Motor neuron (in vitro differentiated cells): ENCODE measurements at regions of chr16 and their contacts with region 1.

Region 1: GRCh38 chr16:68396481-68396880 is 51.8 kb downstream of the SMPD3 start:
- ATAC-seq: peak in 5 of 8 experiments; percentile 25 to 69 (median 32)
- H3K4me3 ChIP-seq: no peak overlapping the region
- H3K27ac ChIP-seq: no peak overlapping the region
- H3K4me1 ChIP-seq: peaks cover 2 to 4% of the 10 kb centered on the region in 2 donors

Region 2: DNA sequence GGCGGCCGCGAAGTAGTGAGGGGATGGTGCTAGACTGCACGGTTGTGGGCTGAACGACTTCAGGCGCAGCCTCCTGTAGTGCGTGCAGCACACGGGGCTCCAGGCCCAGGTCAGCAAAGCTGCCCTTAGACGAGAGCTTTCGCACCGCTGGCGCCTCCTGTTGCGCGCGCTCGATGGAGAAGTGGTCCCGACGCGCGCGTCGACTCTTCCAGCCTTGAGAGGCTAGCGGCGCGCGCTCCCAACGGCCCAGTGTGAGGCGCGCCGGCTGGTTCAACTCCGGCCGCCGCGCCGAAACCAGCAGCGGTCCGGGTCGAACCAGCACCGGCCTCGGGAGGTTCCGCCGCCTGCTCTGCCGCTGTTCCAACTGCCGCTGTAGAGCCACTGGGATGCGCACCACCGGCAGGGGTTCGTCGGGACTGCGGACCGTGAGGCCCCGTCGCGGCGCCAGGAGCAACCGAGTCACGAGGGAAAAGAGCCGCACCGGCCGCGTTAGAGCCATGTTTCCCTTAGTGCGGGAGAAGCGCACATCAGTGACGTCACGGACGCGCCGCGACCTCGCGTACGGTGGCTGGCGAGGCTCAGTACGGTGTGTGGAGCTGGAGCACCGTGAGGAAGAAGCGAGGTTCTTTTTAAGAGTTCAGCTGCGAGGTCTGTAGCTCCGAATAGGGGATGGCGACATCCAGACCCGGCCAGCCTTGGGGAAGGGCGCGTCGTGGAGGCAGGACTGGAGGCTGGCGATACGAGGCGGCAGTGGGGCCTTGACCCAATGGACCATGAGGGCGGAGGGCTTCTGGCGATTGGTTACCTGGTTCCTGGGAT is 373.6 kb before region 1 on chr16 and contains the starts of genes DDX28 and DUS2:
- in situ Hi-C with region 1: no loop called
- ATAC-seq: peak; percentile 80 to 95 (median 92)
- H3K4me3 ChIP-seq: peak within 1 kb of the TSS; percentile 86 to 100 (median 97)
- H3K27ac ChIP-seq: peak within 1 kb of the TSS; percentile 89 to 90
- H3K4me1 ChIP-seq: peaks cover 14% of the 10 kb centered on the region in 2 donors
- total RNA-seq, gene DDX28: 5.6 to 15.8 (median 9.0) TPM
- total RNA-seq, gene DUS2: 9.0 to 19.2 (median 12.8) TPM

Region 3: GRCh38 chr16:68503334-68503733 is 106.9 kb after region 1 on chr16:
- in situ Hi-C with region 1: loop called in 3 of 9 experiments (anchors 10 to 25 kb)
- ATAC-seq: no peak
- H3K4me3 ChIP-seq: no peak overlapping the region
- H3K27ac ChIP-seq: no peak overlapping the region
- H3K4me1 ChIP-seq: no peaks in the 10 kb centered on the region

Region 4: DNA sequence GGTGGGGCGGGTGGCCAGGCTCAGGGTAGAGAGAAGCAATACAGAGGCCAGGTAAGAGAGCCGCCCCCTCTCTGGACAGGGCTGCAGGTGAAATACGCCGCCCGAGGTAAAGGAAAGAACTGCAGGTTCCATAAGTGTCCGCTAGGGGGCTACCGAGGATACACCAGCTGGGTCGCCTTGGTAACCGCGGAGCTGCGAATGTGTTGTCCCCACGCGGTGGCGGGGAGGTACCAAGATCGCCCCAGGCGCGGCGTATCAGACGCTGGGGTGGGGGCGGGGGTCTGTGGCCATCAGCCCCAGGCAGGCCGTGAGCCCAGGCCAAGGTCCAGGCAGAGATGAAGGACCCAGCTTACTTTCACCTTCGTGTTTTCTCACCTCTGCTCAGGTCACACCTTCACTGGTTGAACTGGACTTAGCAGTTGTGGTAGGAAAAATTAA is 124.2 kb after region 1 on chr16:
- in situ Hi-C with region 1: loop called in 2 of 9 experiments (anchors 25 kb)
- ATAC-seq: peak; percentile 93 to 98 (median 95)
- H3K4me3 ChIP-seq: peak overlapping the region in 3 of 5 donors; percentile 11 to 21 (median 16)
- H3K27ac ChIP-seq: no peak overlapping the region
- H3K4me1 ChIP-seq: peaks cover 0 to 2% of the 10 kb centered on the region in 2 donors

Region 5: GRCh38 chr16:69880640-69881133 is 1484.2 kb after region 1 on chr16:
- in situ Hi-C with region 1: no loop called
- ATAC-seq: peak in 1 of 8 experiments; percentile 48
- H3K4me3 ChIP-seq: no peak overlapping the region
- H3K27ac ChIP-seq: no peak overlapping the region
- H3K4me1 ChIP-seq: no peaks in the 10 kb centered on the region